GM10248 (cell line): ENCODE measurements at regions of chr1 and their contacts with region 1.

Region 1: GRCh38 chr1:183834568-183834967 is 29.6 kb downstream of the RGL1 start:
- DNase-seq: no peak
- CTCF ChIP-seq: no peak

Region 2: DNA sequence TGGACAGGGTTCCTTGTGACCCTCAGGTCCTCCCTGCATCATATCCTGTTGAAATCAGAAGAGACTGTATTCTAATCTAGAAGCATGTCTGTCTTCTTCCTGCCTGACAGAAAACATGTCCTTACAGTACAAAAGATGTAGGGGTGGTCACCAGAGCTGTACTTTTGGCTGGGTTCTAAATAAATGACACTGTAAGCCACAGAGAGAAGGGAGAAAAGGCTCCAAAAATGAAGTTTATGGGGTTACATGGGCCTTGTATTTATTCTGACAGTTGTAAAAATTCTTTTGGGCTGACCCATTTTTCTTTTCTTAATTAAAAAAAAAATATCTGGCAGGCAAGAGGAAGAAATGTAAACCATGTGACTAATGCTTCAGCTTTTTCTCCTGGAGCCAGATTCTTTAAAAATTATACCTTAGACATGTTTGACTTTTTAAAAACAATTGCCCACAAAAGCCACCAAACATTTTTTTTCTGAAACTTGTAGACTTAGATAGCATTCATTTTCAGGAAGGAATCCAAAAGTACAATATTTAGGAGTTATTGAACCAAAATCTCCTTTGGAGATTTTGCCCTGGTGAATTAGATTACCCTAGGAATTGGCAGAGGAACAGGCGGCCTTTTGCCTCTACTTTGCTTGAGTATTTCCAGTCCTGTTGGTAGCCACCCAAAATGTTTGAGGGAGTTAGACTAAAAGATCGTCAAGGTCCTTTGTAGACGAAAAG is 12.5 kb before region 1 on chr1:
- CTCF ChIA-PET with region 1: interaction called, 21 read pairs
- POLR2A ChIA-PET with region 1: no interaction called
- DNase-seq: no peak
- CTCF ChIP-seq: no peak

Region 3: DNA sequence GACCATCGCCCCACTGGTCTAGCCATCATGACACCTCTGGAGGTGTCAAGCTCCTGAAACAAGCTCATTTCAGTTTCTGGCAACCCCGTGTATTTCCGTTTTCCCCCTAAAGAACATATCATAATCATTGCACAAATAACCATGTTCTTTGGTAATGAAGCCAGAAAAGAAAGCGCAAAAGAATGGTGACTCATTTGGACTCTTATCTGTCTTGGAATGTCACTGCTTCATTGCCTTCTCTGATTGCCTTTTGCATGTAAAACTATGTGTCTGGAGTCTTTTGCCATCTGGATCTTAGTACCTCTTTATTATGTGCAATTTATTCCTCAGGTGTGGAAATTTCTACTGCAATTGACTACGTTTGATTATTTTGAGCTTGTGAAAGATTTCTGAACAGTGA is 92.4 kb after region 1 on chr1:
- CTCF ChIA-PET with region 1: no interaction called
- POLR2A ChIA-PET with region 1: no interaction called
- DNase-seq: no peak
- CTCF ChIP-seq: no peak